Posterior vena cava (tissue), 2 donors: ENCODE measurements at regions of chr16 and their contacts with region 1.

Region 1: DNA sequence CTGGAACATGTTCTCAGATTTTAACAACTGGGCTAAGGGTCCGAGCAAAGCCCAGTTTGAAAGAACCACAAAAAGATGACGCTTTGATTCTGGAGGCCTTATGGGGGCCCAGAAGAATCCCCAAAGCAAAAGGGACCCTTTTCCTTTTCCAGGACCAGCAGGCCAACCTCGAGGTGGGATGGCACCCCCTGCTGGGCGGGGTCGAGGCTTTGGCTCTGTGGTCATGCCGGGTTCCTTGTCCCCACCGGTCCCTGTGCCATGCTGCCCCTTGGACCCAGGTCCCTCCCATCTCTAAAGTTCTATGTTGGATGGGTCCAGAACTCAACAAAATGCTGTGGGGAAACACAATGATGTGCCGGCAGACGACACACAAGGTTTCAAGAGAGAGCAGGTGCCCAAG is 30.9 kb downstream of the TMEM204 start:
- DNase-seq: no peak

Region 2: DNA sequence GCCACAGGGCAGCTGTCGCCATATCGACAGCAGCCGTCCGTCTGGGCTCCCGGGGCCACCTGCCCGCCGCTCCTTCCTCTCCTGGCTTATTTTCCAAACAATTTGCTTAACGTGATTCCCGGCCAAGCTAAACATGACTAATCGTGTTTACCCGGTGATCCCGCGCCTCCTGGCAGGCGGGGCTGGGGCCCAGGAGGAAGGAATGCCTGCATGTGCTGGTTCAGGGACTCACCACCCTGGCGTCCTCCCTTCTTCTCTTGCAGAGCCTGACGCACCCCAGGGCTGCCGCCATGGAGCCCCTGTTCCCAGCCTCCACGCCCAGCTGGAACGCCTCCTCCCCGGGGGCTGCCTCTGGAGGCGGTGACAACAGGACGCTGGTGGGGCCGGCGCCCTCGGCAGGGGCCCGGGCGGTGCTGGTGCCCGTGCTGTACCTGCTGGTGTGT is 485.7 kb before region 1 on chr16:
- intact Hi-C with region 1: no loop called
- DNase-seq: no peak

Region 3: GRCh38 chr16:1113889-1114526 is 450.3 kb before region 1 on chr16:
- intact Hi-C with region 1: no loop called
- DNase-seq: no peak

Region 4: GRCh38 chr16:1197237-1197866 is 367.0 kb before region 1 on chr16:
- intact Hi-C with region 1: no loop called
- DNase-seq: no peak

Region 5: GRCh38 chr16:1460602-1461138 is 103.7 kb before region 1 on chr16:
- intact Hi-C with region 1: loop called in 1 of 2 experiments (anchors 5 kb)
- DNase-seq: peak; percentile 57